ENCODE measurements at regions of chr3 and their contacts with region 1.

Region 1: GRCh38 chr3:128343287-128344051 is 123.2 kb downstream of the DNAJB8 start:
- DNase-seq: no peak

Region 2: GRCh38 chr3:128584412-128585020 is 241.0 kb after region 1 on chr3:
- intact Hi-C with region 1: loop called (anchors 10 kb)
- DNase-seq: no peak